ENCODE measurements at regions of chr13 and their contacts with region 1.

Region 1: DNA sequence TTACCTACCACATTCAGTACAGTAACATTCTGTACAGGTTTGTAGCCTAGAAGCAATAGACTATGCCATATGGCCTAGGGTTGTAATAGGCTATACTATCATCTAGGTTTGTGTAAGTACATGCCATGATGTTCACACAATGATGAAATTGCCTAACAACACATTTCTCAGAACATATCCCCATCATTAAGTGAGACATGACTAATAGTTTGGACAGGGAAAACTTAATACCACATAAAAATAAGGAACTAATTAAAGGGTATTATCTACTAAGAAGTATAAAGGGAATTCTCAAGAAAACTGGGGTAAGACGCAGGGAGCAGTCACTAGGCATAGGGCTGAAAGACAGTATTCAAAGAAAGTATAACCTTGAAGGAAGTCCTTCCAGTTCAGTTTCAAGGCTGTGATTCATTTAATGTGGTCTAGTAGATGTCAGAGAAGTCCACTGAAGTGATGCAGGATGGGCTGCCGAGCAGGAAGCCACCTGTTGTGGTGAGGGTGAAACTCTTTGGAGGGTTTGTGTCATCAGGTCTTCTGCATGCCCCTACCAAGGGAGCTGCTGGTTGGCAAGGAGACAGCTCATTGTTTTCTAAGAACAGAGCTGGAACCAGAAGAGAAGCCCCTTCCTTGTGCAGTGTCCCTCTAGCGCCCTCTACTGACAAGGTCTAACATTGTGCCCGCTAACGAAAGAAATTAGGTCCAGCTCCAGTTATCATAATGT is 122.9 kb downstream of the OLFM4 start:
- DNase-seq: peak; percentile 47 to 59
- H3K4me3 ChIP-seq: no peak overlapping the region
- H3K4me3 Mint-ChIP-seq: no peak overlapping the region
- H3K27ac Mint-ChIP-seq: no peak overlapping the region
- H3K4me1 ChIP-seq: no peaks in the 10 kb centered on the region
- H3K4me1 Mint-ChIP-seq: no peaks in the 10 kb centered on the region
- H3K27me3 ChIP-seq: no peaks in the 10 kb centered on the region
- H3K27me3 Mint-ChIP-seq: peaks cover 6% of the 10 kb centered on the region
- CTCF ChIP-seq: peak; percentile 80

Region 2: GRCh38 chr13:52862358-52863206 is 288.9 kb before region 1 on chr13:
- CTCF ChIA-PET with region 1: no interaction called
- POLR2A ChIA-PET with region 1: no interaction called
- intact Hi-C with region 1: loop called (anchors 1 kb)
- DNase-seq: peak in 1 of 2 experiments; percentile 57
- H3K4me3 ChIP-seq: no peak overlapping the region
- H3K4me3 Mint-ChIP-seq: no peak overlapping the region
- H3K27ac Mint-ChIP-seq: no peak overlapping the region
- H3K4me1 ChIP-seq: no peaks in the 10 kb centered on the region
- H3K4me1 Mint-ChIP-seq: no peaks in the 10 kb centered on the region
- H3K27me3 ChIP-seq: no peaks in the 10 kb centered on the region; the same call in 1 of the 2 replicates
- H3K27me3 Mint-ChIP-seq: peaks cover 8% of the 10 kb centered on the region
- CTCF ChIP-seq: peak; percentile 38 to 73

Region 3: GRCh38 chr13:52903320-52903719 is 248.2 kb before region 1 on chr13:
- CTCF ChIA-PET with region 1: no interaction called
- POLR2A ChIA-PET with region 1: no interaction called
- intact Hi-C with region 1: no loop called
- DNase-seq: no peak
- H3K4me3 ChIP-seq: no peak overlapping the region
- H3K4me3 Mint-ChIP-seq: no peak overlapping the region
- H3K27ac Mint-ChIP-seq: no peak overlapping the region
- H3K4me1 ChIP-seq: no peaks in the 10 kb centered on the region
- H3K4me1 Mint-ChIP-seq: no peaks in the 10 kb centered on the region
- H3K27me3 ChIP-seq: no peaks in the 10 kb centered on the region; the same call in 1 of the 2 replicates
- H3K27me3 Mint-ChIP-seq: peaks cover 38% of the 10 kb centered on the region
- CTCF ChIP-seq: no peak

Region 4: GRCh38 chr13:53004573-53004972 is 146.9 kb before region 1 on chr13:
- CTCF ChIA-PET with region 1: interaction called, 3 read pairs
- POLR2A ChIA-PET with region 1: no interaction called
- intact Hi-C with region 1: loop called (anchors 1 kb)
- DNase-seq: no peak
- H3K4me3 ChIP-seq: no peak overlapping the region
- H3K4me3 Mint-ChIP-seq: no peak overlapping the region
- H3K27ac Mint-ChIP-seq: no peak overlapping the region
- H3K4me1 ChIP-seq: no peaks in the 10 kb centered on the region
- H3K4me1 Mint-ChIP-seq: no peaks in the 10 kb centered on the region
- H3K27me3 ChIP-seq: no peaks in the 10 kb centered on the region
- H3K27me3 Mint-ChIP-seq: peaks cover 15% of the 10 kb centered on the region
- CTCF ChIP-seq: no peak

Region 5: DNA sequence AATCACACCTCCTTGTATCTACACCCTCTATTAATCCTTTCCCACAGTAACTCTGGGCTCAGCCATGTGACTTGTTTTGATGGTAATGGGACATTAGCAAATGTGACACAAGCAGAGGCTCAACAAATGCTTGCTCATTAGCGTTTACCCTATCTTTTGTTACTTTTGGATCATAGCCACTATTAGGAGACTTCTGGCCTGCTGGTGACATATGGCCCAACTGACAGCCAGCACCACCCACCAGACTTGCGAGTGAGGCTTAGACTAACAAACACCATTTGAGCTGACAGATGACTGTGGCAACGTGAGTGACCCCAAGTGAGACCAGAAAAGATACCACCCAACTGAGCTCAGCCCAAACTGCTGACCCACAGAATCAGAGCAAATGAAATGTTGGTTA is 31.2 kb after region 1 on chr13:
- CTCF ChIA-PET with region 1: no interaction called
- POLR2A ChIA-PET with region 1: no interaction called
- intact Hi-C with region 1: no loop called
- DNase-seq: no peak
- H3K4me3 ChIP-seq: no peak overlapping the region
- H3K4me3 Mint-ChIP-seq: no peak overlapping the region
- H3K27ac Mint-ChIP-seq: no peak overlapping the region
- H3K4me1 ChIP-seq: no peaks in the 10 kb centered on the region
- H3K4me1 Mint-ChIP-seq: no peaks in the 10 kb centered on the region
- H3K27me3 ChIP-seq: no peaks in the 10 kb centered on the region
- H3K27me3 Mint-ChIP-seq: peaks cover 5% of the 10 kb centered on the region
- CTCF ChIP-seq: no peak

Measured in Caco-2 (cell line).